ENCODE measurements at regions of chr1 and their contacts with region 1.

Region 1: DNA sequence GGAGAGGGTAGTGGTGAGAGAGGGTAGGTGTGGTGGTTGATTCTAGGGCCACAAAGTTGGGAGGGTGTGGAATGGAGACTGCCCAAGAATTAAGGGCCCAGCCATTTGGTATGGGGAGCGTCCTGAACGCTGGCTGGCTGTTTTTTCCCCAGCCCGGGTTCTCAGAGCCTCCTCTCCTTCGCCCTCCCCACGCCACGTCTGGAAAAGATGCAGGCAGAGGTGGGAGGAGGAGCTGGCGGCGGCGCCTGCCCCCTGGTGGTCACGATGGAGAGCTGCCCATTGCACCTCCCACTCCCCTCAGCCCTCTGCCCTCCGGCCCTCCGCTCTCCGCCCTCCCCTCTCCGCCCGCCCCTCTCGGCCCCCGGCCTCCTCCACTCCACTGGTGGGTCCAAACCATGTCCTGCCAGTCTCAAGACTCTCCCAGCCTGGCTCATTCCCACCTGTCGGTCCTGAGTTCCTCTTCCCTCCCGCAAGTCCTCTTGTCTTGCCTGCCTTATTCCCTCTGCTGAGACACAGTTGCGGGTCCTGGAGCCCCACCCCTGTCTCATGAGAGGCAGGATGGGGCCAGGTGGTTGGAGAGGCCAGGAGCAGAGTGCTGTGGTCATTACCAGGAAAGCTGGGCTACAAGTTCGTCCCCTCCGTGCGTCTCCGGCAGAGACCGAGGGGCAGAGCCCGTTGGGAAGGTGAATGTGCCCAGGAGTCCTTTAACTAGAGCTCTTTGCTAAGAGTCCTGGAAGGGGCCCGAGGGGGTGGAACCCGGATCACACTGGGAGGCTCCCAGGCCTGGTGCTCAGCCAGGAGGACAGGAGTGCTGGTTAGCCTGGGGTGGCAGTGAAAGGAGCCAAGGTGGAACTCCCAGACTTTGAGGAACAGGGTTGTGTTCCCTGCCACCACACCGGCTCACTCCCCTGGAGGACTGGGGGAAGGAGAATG is 22.6 kb downstream of the ETNK2 start:
- DNase-seq: peak; percentile 70 to 90 (median 79)
- ATAC-seq: peak; percentile 74 to 87 (median 80)
- H3K4me3 ChIP-seq: peak overlapping the region in 2 of 4 donors; percentile 29 to 39
- H3K27ac ChIP-seq: peak overlapping the region; percentile 83 to 94 (median 90)
- H3K4me1 ChIP-seq: peaks cover 17 to 24% (median 24%) of the 10 kb centered on the region in 3 donors
- H3K27me3 ChIP-seq: no peaks in the 10 kb centered on the region
- CTCF ChIP-seq: peak; percentile 89 to 95 (median 90)

Region 2: GRCh38 chr1:203871107-203871875 is 257.9 kb before region 1 on chr1:
- intact Hi-C with region 1: loop called (anchors 5 to 10 kb)
- DNase-seq: no peak
- ATAC-seq: peak; percentile 77 to 92 (median 90)
- H3K4me3 ChIP-seq: no peak overlapping the region
- H3K27ac ChIP-seq: no peak overlapping the region
- H3K4me1 ChIP-seq: no peaks in the 10 kb centered on the region
- H3K27me3 ChIP-seq: no peaks in the 10 kb centered on the region
- CTCF ChIP-seq: peak; percentile 39 to 70 (median 54)

Region 3: DNA sequence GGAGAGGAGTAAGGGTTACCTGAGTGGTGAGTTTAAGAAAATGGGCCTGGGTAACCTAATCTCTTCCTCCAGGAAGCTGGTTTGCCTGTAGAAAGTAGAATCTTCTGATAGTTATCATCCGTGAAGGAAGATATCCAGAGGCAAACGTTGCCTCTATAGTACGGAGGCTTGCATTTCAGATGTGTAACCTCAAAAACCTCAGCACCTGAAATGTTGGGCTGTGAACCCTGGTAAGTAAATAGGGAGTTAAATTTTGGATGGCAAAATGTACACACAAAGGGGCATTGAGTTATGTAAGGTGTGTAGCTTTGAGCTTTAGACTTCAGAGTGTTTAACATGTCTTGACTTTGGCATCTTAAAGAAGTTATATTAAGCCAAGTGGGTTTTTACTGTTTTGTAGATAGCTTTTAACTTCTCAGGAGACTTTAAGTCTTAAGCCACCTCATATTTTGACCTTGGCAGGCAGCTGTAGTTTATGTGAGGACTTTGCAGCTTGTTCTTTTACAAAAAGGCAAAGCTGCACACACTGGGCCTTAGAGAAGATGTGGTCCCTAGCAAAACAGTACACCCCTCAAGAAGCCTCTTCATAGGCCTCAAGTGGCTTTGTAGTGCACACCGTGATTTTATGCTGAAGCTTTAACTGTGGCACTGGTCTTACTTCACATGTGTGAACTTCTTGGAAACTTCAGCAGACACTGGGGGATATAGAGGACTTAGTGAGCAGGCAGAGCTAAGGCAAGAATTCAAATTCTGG is 184.4 kb before region 1 on chr1:
- intact Hi-C with region 1: no loop called
- DNase-seq: no peak
- ATAC-seq: no peak
- H3K4me3 ChIP-seq: no peak overlapping the region
- H3K27ac ChIP-seq: no peak overlapping the region
- H3K4me1 ChIP-seq: no peaks in the 10 kb centered on the region
- H3K27me3 ChIP-seq: no peaks in the 10 kb centered on the region
- CTCF ChIP-seq: no peak

Region 4: DNA sequence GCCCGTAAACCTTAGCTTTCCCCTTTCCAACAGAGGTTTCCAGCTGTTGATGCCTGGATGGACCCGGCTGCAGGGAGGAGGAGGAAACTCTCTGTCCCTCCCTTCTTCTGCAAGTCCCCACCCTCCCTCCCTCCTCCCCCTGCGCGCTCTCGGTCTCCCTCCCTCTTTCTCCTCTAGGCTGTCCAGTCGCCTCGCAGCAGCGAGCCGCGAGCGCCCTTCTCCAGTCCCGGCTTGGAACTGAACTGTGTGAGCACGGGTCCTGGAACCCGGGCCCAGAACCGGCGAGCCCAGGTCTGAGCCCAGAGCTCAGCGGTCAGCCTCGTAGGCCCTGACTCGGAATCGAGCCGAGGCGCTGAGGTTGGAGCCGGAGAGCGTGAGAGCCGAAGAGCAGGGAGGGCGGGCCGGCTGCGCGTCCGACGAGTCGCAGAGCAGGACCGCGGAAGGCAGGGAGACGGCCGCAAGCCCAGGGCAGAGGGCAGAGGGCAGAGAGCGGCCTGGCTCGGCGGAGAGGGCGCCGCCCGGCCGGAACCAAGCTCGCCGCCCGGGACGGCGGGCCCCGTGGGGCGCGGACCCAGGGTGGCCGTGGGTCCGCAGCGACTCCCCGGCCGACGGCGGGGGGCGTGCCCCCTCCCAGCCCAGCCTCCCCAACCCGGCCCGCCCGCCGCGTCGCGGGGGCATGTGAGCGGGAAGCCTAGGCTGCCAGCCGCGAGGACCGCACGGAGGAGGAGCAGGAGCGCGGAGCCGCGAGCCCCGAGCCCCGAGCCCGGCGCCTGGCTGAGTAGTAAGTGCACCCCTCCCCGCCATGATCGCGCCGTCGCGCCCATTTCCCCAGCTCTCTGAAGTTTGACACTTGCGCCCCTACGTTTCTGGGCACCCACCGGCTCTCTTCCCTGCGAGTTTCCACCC is 56.0 kb before region 1 on chr1 and contains the start of gene SOX13:
- intact Hi-C with region 1: loop called in 2 of 3 experiments (anchors 5 to 10 kb)
- DNase-seq: peak; percentile 82 to 94 (median 87)
- ATAC-seq: peak; percentile 78 to 85 (median 81)
- H3K4me3 ChIP-seq: peak within 1 kb of the TSS; percentile 54 to 66 (median 62)
- H3K27ac ChIP-seq: peak within 1 kb of the TSS; percentile 70 to 87 (median 77)
- H3K4me1 ChIP-seq: peaks cover 10 to 14% (median 10%) of the 10 kb centered on the region in 3 donors
- H3K27me3 ChIP-seq: no peaks in the 10 kb centered on the region
- CTCF ChIP-seq: no peak
- total RNA-seq, gene SOX13: 12.0 to 27.2 (median 18.0) TPM

Measured in pancreas (tissue), 10 donors.